HepG2 (cell line): ENCODE measurements at regions of chr6 and their contacts with region 1.

Region 1: DNA sequence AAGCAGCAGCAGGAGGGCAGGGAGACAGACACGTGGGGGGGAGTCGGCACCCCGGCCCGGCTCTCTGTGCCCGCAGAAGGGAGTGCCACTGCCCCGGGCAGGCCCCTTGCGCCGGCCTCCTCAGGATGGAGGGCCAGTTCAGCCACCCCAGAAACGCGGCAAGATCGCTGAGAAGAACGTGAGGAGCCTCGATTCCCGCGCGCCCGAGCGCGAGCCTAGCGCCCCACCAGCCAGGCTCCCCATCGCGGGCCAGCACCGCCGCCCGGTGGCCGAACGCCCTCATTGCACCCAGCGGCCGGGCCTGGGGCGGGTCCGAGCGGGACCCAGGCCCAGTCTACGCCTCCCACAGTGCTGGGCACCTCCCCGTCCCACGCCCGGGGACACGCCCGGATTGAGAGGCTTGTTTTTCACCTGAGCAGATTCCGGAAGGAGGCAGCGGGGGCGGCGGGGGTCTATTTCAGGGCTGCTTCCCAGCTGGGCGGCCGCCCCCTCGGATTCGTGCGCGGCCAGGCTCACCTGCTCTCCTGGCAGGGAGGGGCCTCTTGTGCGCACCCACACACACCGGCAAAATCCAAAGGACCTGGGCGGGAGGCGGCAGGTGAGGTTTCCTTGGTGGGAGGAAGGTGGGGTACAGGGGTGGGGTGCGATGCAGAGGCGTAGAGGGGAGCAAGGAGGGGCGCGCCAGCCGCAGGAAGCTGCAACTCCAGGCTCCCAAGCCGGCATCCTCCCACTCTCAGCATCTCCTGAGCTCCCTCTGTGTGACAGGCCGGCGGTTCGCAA is 9.0 kb upstream of the GRM4 start:
- DNase-seq: no peak
- ATAC-seq: peak; percentile 84
- H3K4me3 ChIP-seq: peak overlapping the region in 1 of 3 experiments; percentile 36; a peak in 1 of 6 replicates
- H3K27ac ChIP-seq: no peak overlapping the region
- H3K4me1 ChIP-seq: no peaks in the 10 kb centered on the region; the same call in 1 of the 2 replicates
- H3K27me3 ChIP-seq: peaks cover 11 to 43% of the 10 kb centered on the region in 2 experiments
- CTCF ChIP-seq: peak; percentile 92
- EP300 ChIP-seq: no peak
- POLR2A ChIP-seq: no peak
- RAD21 ChIP-seq: peak; percentile 97

Region 2: DNA sequence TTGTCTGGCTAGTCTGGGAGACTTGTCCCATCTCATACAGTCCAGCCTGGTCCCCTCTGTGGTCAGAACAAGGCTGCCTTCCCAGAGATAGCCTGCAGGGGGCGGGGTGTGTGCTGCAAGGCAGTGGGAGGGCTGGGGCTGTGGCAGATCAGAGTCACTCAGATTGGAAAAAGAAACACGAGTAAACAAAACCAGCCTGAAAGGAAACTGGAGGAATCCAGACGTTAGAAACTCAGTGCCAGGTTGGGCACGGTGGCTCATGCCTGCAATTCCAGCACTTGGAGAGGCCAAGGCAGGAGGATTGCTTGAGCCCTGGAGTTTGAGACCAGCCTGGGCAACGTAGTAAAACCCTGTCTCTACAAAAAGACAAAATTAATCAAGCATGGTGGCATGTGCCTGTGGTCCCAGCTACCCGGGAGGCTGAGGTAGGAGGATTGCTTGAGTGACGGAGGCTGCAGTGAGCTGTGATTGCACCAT is 386.2 kb before region 1 on chr6:
- CTCF ChIA-PET with region 1: interaction called, 3 read pairs
- POLR2A ChIA-PET with region 1: no interaction called
- in situ Hi-C with region 1: loop called (anchors 10 kb)
- intact Hi-C with region 1: no loop called
- DNase-seq: peak; percentile 64
- ATAC-seq: peak; percentile 89
- H3K4me3 ChIP-seq: no peak overlapping the region
- H3K27ac ChIP-seq: no peak overlapping the region
- H3K4me1 ChIP-seq: peaks cover 5% of the 10 kb centered on the region
- H3K27me3 ChIP-seq: peaks cover 2 to 17% of the 10 kb centered on the region in 2 experiments; a peak in 3 of 5 replicates
- CTCF ChIP-seq: peak; percentile 94
- EP300 ChIP-seq: no peak
- POLR2A ChIP-seq: no peak
- RAD21 ChIP-seq: peak; percentile 69

Region 3: DNA sequence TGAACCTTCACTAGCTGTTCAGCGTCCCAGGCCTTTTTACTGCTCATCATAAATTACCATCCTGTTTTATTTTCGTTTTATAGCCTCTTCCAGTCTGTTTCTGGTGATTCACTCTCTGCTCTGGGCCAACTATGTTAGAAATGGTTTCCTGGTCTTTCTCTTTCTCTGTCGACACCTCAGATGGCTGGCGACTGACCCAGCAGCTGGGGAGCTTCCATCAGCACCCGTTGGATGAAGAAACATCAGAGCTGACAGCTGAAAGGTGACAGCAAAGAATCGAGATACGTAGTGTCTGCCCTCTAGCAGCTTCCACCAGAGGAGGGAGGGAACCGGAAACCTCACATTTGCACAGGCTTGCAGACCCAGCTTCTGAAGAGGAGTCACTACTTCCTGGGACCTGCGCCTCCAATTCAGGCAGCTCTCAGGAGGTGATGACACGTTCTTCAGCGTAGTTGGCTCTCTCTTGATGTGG is 268.1 kb before region 1 on chr6:
- CTCF ChIA-PET with region 1: no interaction called
- POLR2A ChIA-PET with region 1: no interaction called
- in situ Hi-C with region 1: no loop called
- intact Hi-C with region 1: no loop called
- DNase-seq: no peak
- ATAC-seq: no peak
- H3K4me3 ChIP-seq: no peak overlapping the region
- H3K27ac ChIP-seq: no peak overlapping the region
- H3K4me1 ChIP-seq: peaks cover 9% of the 10 kb centered on the region
- H3K27me3 ChIP-seq: peaks cover 4 to 44% of the 10 kb centered on the region in 2 experiments; a peak in 3 of 5 replicates
- CTCF ChIP-seq: no peak
- EP300 ChIP-seq: no peak
- POLR2A ChIP-seq: no peak
- RAD21 ChIP-seq: no peak

Region 4: GRCh38 chr6:34055223-34055933 is 99.5 kb before region 1 on chr6:
- CTCF ChIA-PET with region 1: interaction called, 26 read pairs
- POLR2A ChIA-PET with region 1: no interaction called
- in situ Hi-C with region 1: no loop called
- intact Hi-C with region 1: loop called (anchors 1 kb)
- DNase-seq: peak; percentile 60
- ATAC-seq: peak; percentile 88
- H3K4me3 ChIP-seq: no peak overlapping the region
- H3K27ac ChIP-seq: no peak overlapping the region
- H3K4me1 ChIP-seq: no peaks in the 10 kb centered on the region
- H3K27me3 ChIP-seq: peaks cover 14 to 66% of the 10 kb centered on the region in 2 experiments
- CTCF ChIP-seq: peak; percentile 94
- EP300 ChIP-seq: no peak
- POLR2A ChIP-seq: no peak
- RAD21 ChIP-seq: peak; percentile 73